ENCODE measurements at regions of chr11 and their contacts with region 1.

Region 1: DNA sequence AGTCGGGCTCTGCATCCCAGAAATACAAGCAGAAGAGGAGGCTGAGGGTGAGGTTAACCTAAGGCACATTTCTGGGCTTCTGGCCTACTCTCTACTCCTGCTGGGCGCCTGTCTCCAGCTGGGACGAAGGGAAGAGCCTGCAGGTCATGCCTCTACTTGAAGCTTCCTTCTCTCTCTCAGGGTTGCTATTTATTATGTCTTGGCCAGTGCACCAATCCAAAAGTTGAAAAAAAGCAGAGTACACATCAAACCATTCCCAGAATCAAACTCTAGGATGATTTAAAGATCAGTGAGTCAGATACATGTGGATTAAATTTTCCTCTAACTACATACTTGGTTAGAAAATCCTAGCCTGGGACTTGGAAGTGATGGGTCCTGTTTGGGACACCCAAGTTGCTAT is 60.2 kb upstream of the CDON start:
- DNase-seq: no peak
- ATAC-seq: no peak
- H3K4me3 ChIP-seq: no peak overlapping the region
- H3K4me3 Mint-ChIP-seq: no peak overlapping the region
- H3K27ac ChIP-seq: no peak overlapping the region
- H3K27ac Mint-ChIP-seq: no peak overlapping the region
- H3K4me1 ChIP-seq: no peaks in the 10 kb centered on the region
- H3K4me1 Mint-ChIP-seq: no peaks in the 10 kb centered on the region
- H3K27me3 ChIP-seq: no peaks in the 10 kb centered on the region
- H3K27me3 Mint-ChIP-seq: no peaks in the 10 kb centered on the region
- CTCF ChIP-seq: no peak

Region 2: GRCh38 chr11:125941619-125942611 is 180.9 kb before region 1 on chr11:
- CTCF ChIA-PET with region 1: no interaction called
- POLR2A ChIA-PET with region 1: no interaction called
- intact Hi-C with region 1: loop called in 1 of 2 experiments (anchors 5 kb)
- DNase-seq: peak; percentile 11 to 64 (median 34)
- ATAC-seq: no peak
- H3K4me3 ChIP-seq: no peak overlapping the region
- H3K4me3 Mint-ChIP-seq: no peak overlapping the region
- H3K27ac ChIP-seq: no peak overlapping the region
- H3K27ac Mint-ChIP-seq: no peak overlapping the region
- H3K4me1 ChIP-seq: peaks cover 14% of the 10 kb centered on the region
- H3K4me1 Mint-ChIP-seq: peaks cover 6% of the 10 kb centered on the region
- H3K27me3 ChIP-seq: peaks cover 0 to 3% of the 10 kb centered on the region in 2 experiments
- H3K27me3 Mint-ChIP-seq: no peaks in the 10 kb centered on the region
- CTCF ChIP-seq: peak; percentile 62

Region 3: GRCh38 chr11:125978778-125979407 is 144.0 kb before region 1 on chr11:
- CTCF ChIA-PET with region 1: no interaction called
- POLR2A ChIA-PET with region 1: no interaction called
- intact Hi-C with region 1: no loop called
- DNase-seq: no peak
- ATAC-seq: no peak
- H3K4me3 ChIP-seq: no peak overlapping the region
- H3K4me3 Mint-ChIP-seq: no peak overlapping the region
- H3K27ac ChIP-seq: no peak overlapping the region
- H3K27ac Mint-ChIP-seq: no peak overlapping the region
- H3K4me1 ChIP-seq: no peaks in the 10 kb centered on the region
- H3K4me1 Mint-ChIP-seq: no peaks in the 10 kb centered on the region
- H3K27me3 ChIP-seq: no peaks in the 10 kb centered on the region
- H3K27me3 Mint-ChIP-seq: no peaks in the 10 kb centered on the region
- CTCF ChIP-seq: no peak

Region 4: DNA sequence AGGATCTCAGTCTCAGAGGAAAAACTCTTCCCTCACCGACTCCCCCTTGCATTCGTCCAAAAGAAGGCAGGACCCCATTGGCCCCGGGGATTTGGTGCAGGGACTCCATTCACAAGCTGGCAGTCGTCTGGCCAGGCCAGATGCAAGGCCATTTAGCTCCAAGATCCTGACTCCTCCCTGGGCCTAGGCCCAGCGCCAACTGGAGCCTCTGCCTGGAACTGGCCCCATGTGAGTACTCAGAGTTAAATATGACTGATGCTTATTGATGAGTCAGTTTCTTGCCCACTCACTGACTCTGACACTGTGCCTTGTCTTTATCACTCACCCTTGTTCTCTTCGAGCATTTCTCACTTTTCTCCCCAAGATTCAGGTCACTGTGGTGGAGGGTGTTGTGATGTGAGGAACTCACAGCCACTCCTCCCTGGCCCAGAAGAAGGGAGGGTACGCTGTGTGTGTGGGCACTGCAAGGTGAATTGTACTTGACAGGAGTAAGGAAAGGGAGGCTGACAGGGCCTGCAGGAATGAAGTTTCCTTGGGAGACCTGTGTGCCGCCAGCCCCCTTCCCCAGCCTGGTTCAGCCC is 209.4 kb after region 1 on chr11:
- CTCF ChIA-PET with region 1: no interaction called
- POLR2A ChIA-PET with region 1: no interaction called
- intact Hi-C with region 1: no loop called
- DNase-seq: peak in 1 of 14 experiments; percentile 62
- ATAC-seq: no peak
- H3K4me3 ChIP-seq: no peak overlapping the region
- H3K4me3 Mint-ChIP-seq: no peak overlapping the region
- H3K27ac ChIP-seq: no peak overlapping the region
- H3K27ac Mint-ChIP-seq: no peak overlapping the region
- H3K4me1 ChIP-seq: peaks cover 3% of the 10 kb centered on the region
- H3K4me1 Mint-ChIP-seq: peaks cover 12% of the 10 kb centered on the region
- H3K27me3 ChIP-seq: no peaks in the 10 kb centered on the region
- H3K27me3 Mint-ChIP-seq: no peaks in the 10 kb centered on the region
- CTCF ChIP-seq: no peak

Region 5: DNA sequence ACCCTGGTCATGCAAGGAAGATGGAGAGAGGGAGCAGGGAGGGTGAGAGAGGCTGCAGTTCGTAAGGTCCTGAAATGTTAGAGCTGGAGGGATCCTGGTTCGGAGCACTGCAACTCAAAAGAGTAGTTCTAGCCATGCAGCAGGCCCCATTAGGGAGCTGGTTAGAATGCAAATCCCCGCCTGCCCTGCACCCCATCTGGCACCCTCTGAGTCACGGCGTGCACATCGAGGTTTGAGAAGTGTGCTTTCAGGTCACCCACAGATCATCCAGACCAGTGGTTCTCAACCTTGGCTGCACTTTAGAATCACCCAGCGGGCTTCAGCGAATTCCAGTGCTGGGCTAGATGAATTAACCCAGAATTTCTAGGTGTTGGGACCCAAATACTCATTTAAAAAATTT is 280.8 kb after region 1 on chr11:
- CTCF ChIA-PET with region 1: no interaction called
- POLR2A ChIA-PET with region 1: no interaction called
- intact Hi-C with region 1: no loop called
- DNase-seq: no peak
- ATAC-seq: no peak
- H3K4me3 ChIP-seq: no peak overlapping the region
- H3K4me3 Mint-ChIP-seq: no peak overlapping the region
- H3K27ac ChIP-seq: no peak overlapping the region
- H3K27ac Mint-ChIP-seq: no peak overlapping the region
- H3K4me1 ChIP-seq: no peaks in the 10 kb centered on the region
- H3K4me1 Mint-ChIP-seq: no peaks in the 10 kb centered on the region
- H3K27me3 ChIP-seq: no peaks in the 10 kb centered on the region
- H3K27me3 Mint-ChIP-seq: no peaks in the 10 kb centered on the region
- CTCF ChIP-seq: no peak

Measured in CD4-positive, alpha-beta T cell (primary cell).